ENCODE measurements at regions of chr12 and their contacts with region 1.

Region 1: GRCh38 chr12:2879853-2880252 is 2.8 kb downstream of the RHNO1 start:
- DNase-seq: no peak
- ATAC-seq: no peak
- H3K4me3 ChIP-seq: no peak overlapping the region
- H3K27ac ChIP-seq: no peak overlapping the region
- H3K4me1 ChIP-seq: no peaks in the 10 kb centered on the region
- H3K27me3 ChIP-seq: no peaks in the 10 kb centered on the region

Region 2: DNA sequence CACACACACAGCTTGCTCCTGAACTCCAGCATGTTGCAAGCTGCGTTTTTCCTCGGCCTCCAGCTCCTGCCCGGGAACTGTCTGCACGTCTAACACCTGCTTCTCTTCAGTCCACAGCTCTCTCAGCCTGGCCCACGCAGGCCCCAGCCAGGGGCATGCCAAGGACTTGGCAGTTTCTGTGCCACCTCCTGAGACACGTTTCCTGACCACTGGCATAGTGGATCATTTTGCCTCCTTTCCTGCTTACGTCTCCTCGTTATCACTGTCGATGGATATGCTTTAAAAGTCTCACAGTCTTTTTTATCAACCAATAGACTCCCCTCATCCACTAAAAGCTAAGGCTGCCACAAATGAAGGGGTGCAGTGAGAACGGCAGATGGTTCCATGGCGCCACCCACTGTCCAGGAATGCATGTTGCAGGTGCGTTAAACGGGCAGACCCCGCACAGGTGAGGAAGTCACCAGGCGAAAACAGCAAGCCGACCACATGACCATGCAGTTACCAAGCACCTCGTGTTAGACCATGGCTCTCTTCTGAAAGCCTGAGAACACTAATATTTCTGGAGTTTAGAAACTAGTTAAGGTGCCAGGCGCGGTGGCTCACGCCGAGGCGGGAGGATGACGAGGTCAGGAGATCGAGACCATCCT is 64.7 kb after region 1 on chr12:
- intact Hi-C with region 1: loop called in 1 of 2 experiments (anchors 10 kb)
- DNase-seq: peak in 1 of 2 donors; percentile 78
- ATAC-seq: peak; percentile 57
- H3K4me3 ChIP-seq: no peak overlapping the region
- H3K27ac ChIP-seq: no peak overlapping the region
- H3K4me1 ChIP-seq: no peaks in the 10 kb centered on the region
- H3K27me3 ChIP-seq: no peaks in the 10 kb centered on the region

Region 3: DNA sequence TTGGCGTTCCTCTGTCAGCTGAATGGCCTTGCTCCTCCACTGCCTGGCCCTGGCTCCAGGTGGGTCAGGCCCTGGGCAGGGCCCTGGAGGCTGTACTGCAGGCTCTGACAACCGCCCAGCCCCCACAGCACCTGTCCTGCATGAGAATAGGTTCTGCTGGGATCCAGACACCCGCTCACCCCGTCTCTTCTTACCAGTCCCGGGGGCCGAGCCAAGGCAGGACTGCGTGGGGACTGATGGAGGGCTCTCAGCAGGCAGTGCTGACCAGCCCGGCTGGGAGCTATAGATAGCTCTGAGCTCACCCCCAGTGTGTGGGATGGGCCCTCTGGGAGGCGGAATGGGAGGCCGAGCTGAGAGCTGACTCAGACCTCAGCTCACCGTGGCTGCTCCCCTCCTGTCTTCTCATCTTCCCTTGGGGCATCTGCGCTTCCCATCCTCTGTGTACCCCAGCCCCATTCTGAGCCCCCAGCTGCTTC is 119.0 kb after region 1 on chr12:
- intact Hi-C with region 1: no loop called
- DNase-seq: peak; percentile 79 to 92
- ATAC-seq: peak; percentile 86
- H3K4me3 ChIP-seq: no peak overlapping the region
- H3K27ac ChIP-seq: peak overlapping the region in 1 of 2 donors; percentile 10
- H3K4me1 ChIP-seq: no peaks in the 10 kb centered on the region
- H3K27me3 ChIP-seq: no peaks in the 10 kb centered on the region

Region 4: GRCh38 chr12:3034067-3034750 is 154.4 kb after region 1 on chr12:
- intact Hi-C with region 1: loop called in 1 of 2 experiments (anchors 10 kb)
- DNase-seq: peak; percentile 59 to 86
- ATAC-seq: peak; percentile 64
- H3K4me3 ChIP-seq: no peak overlapping the region
- H3K27ac ChIP-seq: no peak overlapping the region
- H3K4me1 ChIP-seq: no peaks in the 10 kb centered on the region
- H3K27me3 ChIP-seq: no peaks in the 10 kb centered on the region

Measured in aorta (tissue), 5 donors.